Psoas muscle (tissue), 8 donors: ENCODE measurements at regions of chr9 and their contacts with region 1.

Region 1: DNA sequence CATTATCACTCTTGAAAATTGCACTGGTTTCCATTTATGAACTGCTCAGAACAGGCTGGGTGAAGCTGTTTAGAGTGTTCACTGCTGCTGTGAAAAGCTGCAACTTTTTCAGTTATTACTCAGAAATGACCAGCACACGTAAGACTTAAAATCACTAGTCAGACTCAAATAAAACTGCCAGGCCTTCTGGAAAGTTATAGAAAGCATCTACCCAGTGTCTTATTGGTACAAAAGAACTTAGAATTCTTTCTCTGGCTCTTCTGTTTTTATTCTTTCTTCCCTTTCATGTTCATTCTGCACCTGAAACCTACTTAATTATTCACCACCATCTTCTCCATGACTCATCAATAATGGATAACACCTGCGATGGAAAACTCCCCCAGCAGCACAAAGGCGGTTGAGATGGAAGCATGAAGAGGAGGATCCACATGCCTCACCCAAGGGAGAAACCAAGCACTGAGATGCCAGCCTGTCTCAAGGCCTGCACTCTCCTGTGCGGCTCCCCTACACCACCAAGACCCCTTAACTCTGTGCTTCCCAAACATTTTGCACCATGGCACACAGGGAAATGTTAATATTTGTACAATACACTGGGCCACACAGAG is 171.9 kb downstream of the ENTREP1 start:
- DNase-seq: no peak
- ATAC-seq: no peak
- H3K4me3 ChIP-seq: no peak overlapping the region
- H3K27ac ChIP-seq: no peak overlapping the region
- H3K4me1 ChIP-seq: peaks cover 9% of the 10 kb centered on the region
- H3K27me3 ChIP-seq: no peaks in the 10 kb centered on the region
- CTCF ChIP-seq: no peak

Region 2: GRCh38 chr9:69519470-69520240 is 22.7 kb after region 1 on chr9:
- intact Hi-C with region 1: loop called in 1 of 2 experiments (anchors 2 kb)
- DNase-seq: no peak
- ATAC-seq: no peak
- H3K4me3 ChIP-seq: no peak overlapping the region
- H3K27ac ChIP-seq: no peak overlapping the region
- H3K4me1 ChIP-seq: no peaks in the 10 kb centered on the region
- H3K27me3 ChIP-seq: no peaks in the 10 kb centered on the region
- CTCF ChIP-seq: no peak

Region 3: GRCh38 chr9:69549310-69550202 is 52.6 kb after region 1 on chr9:
- intact Hi-C with region 1: loop called in 1 of 2 experiments (anchors 10 kb)
- DNase-seq: no peak
- ATAC-seq: peak; percentile 57 to 90 (median 75)
- H3K4me3 ChIP-seq: no peak overlapping the region
- H3K27ac ChIP-seq: no peak overlapping the region
- H3K4me1 ChIP-seq: peaks cover 3% of the 10 kb centered on the region
- H3K27me3 ChIP-seq: no peaks in the 10 kb centered on the region
- CTCF ChIP-seq: peak; percentile 86